Activated CD4-positive, alpha-beta T cell treated with anti-CD3 and anti-CD28 coated beads, Interleukin-2, amount 10 ng/mL, durations not matched to agents 24 days and 14 days (primary cell): ENCODE measurements at regions of chr5 and their contacts with region 1.

Region 1: DNA sequence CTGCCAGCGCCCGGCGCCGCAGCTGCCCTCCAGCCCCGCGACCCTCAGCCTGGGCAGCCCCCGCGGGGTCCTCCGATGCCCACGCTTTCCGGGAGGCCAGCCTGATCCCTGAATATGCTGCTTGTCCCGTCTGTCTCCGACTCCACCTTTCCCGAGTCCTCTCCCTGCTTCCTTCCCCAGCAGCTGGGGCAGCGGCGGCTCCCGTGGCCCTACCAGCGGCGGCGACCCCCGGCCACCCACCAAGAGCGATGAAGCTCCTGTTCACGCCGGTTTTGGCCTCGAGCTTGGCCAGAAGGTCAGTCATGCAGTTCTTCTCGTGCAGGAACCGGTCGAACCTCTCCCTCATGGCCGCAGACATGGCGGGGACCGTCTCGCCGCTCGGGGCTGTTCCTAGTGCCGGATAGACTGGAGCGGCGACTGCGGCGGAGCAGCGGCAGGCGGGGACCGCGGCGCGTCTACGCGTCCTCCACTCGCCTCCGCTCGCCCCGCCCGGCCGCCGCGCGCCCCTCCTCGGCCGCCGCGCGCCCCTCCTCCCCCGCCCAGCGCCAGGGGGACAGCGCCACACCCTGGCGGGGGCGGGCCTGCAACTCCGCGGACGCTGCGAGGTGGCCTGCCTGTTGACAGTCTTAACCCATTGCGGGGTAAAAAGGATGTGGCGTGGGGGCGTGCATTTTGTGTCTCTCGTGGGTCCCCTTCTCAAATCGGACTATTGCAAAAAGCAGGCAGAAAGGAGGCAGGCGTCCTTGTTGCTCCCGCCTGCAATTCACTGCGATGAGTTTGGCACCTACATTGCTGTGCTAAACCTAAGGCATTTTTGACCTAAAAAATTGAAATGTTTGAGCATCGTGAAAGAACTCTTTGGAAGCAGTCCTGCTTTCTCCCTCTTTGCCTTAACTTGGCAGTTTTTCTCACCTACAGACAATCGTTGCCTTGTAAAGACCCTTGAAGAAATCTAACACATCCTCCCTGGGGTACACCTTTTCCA is at the start of gene REEP5:
- DNase-seq: peak; percentile 96
- H3K4me3 Mint-ChIP-seq: peak within 1 kb of the TSS; percentile 99
- H3K27ac Mint-ChIP-seq: peak within 1 kb of the TSS; percentile 93
- H3K4me1 Mint-ChIP-seq: peaks cover 58% of the 10 kb centered on the region
- H3K27me3 Mint-ChIP-seq: no peaks in the 10 kb centered on the region
- total RNA-seq, gene REEP5: 74.4 and 75.3 TPM in 2 replicates

Region 2: DNA sequence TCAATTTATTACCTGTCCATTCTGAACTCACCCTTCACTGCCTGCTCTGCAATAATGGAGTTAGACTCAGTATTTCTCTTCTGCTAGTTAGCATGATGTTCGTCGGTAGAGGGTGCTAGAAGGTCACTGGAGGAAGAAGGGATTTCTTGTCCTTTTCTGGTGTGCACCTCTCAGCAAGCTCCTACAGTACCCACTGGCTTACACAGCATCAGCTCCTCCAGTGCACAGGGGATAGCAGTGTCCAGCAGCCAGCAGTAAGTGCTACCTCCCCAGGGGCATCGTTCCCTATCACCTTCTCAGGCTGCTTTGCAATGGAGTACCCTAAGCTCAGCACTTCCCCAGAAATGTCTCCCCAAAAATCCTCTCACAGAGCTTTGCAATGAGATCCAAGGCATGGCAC is 230.4 kb before region 1 on chr5:
- intact Hi-C with region 1: loop called (anchors 5 kb)
- DNase-seq: peak; percentile 76
- H3K4me3 Mint-ChIP-seq: no peak overlapping the region
- H3K27ac Mint-ChIP-seq: no peak overlapping the region
- H3K4me1 Mint-ChIP-seq: peaks cover 2% of the 10 kb centered on the region
- H3K27me3 Mint-ChIP-seq: peaks cover 51% of the 10 kb centered on the region

Region 3: DNA sequence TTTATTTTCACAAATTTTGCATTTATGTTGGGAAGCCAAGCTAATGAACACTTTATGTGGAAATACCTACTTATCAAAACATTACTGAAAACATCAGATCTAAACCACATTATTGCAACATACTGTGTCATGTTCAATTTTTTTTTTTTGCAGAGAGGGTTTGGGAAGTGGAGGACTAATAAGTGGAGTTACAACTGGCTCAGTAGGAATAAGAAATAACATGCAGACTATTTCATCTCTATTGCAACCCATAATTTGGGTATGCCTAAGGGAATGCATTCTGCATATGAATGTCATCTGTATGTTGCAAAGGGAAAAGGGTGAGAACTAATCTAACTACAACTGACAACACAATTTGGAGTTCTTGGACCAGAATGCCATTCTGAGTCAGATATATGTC is 142.6 kb before region 1 on chr5:
- intact Hi-C with region 1: loop called (anchors 10 kb)
- DNase-seq: no peak
- H3K4me3 Mint-ChIP-seq: no peak overlapping the region
- H3K27ac Mint-ChIP-seq: no peak overlapping the region
- H3K4me1 Mint-ChIP-seq: peaks cover 3% of the 10 kb centered on the region
- H3K27me3 Mint-ChIP-seq: no peaks in the 10 kb centered on the region

Region 4: DNA sequence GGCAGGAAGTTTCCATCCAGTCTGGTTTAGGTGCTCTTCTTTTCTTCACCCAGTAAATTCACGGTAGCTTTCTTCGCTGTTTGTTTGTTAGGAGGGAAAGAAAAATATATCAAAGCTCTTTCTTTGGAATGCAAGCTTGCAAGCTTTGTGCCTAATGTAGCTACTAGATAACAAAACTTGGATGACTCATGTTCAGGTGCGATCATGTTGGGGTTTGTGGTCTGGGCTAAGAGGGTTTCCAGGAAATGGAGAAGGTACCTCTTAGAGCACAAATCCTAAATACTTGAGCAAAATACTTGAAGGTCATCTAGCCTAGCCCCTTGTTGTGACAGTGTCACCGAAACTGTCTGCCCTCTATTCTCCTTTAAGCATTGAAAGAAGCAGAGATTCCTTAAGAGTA is 43.4 kb before region 1 on chr5:
- intact Hi-C with region 1: loop called (anchors 2 kb)
- DNase-seq: peak; percentile 88
- H3K4me3 Mint-ChIP-seq: peak overlapping the region; percentile 57
- H3K27ac Mint-ChIP-seq: peak overlapping the region; percentile 68
- H3K4me1 Mint-ChIP-seq: peaks cover 33% of the 10 kb centered on the region
- H3K27me3 Mint-ChIP-seq: no peaks in the 10 kb centered on the region

Region 5: GRCh38 chr5:112976432-112977309 is 54.5 kb after region 1 on chr5 and contains the start of gene DCP2:
- intact Hi-C with region 1: loop called (anchors 1 kb)
- DNase-seq: peak; percentile 99
- H3K4me3 Mint-ChIP-seq: peak within 1 kb of the TSS; percentile 93
- H3K27ac Mint-ChIP-seq: peak within 1 kb of the TSS; percentile 94
- H3K4me1 Mint-ChIP-seq: peaks cover 35% of the 10 kb centered on the region
- H3K27me3 Mint-ChIP-seq: no peaks in the 10 kb centered on the region
- total RNA-seq, gene DCP2: 73.6 and 78.8 TPM in 2 replicates

Region 6: DNA sequence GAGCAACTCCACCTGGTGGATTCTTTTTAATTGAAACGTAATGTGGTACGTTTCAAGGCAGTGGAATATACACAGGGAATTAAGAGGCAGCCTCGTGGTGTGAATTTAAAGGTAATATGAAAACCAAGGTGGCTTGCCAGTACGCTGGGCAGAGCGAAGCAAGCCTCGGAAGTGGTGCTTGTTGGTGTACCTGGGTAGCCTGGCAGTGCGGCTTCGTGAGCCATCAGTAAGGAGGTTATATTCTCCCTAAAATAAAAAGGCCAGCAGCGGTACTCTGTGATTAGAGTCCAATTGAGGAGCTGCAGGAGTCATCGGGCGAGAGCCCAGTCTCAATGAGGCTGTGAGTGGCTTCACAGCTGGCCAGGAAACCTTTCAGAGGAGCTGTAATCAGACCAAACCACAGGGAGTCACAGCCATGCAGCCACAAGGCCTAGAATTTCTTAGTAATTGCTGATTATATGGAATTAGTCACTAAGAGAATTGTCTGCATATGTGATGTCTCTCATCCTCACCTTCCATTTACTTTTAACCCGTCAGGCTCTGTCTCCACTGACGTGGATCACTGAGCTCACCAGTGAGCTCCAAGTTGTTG is 112.2 kb after region 1 on chr5:
- intact Hi-C with region 1: no loop called
- DNase-seq: no peak
- H3K4me3 Mint-ChIP-seq: no peak overlapping the region
- H3K27ac Mint-ChIP-seq: no peak overlapping the region
- H3K4me1 Mint-ChIP-seq: peaks cover 6% of the 10 kb centered on the region
- H3K27me3 Mint-ChIP-seq: no peaks in the 10 kb centered on the region